Heart right ventricle (tissue), 16 donors: ENCODE measurements at regions of chr5 and their contacts with region 1.

Region 1: DNA sequence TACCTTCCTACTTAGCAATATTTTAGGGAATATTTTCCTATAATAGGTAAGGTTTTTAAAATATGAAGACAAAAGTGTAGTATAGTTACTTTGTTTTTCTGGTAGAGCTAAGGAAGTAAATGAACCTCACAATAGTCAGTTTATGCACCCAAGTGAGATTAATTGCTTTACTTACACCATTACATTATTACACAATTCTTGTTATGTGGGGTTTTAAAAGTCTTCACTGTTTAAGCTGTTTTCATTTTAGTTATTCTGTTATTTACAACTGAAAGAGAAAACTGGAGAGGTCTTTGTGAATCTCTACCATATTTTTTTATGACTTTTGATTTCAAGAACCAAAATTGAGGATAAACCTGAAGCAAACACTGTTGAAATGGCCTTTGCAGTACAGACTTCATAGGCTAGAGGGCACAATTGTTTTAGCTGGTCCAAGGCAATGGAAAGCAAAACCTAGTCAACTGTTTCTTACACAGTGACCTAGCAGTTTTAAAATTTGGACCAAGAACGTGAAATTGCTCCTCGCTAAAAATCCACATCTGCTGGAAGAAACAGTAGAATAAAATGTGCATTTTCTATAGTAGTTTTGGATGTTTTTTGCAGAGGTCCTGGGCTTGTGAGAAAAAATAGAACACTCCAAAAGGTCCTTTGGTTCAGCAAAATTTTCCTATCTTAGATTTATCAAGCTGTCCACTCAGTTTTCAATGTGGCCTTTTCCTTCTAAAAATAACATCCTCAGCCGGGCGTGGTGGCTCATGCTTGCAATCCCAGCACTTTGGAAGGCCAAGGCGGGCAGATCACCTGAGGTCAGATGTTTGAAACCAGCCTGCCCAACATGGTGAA is 66.4 kb upstream of the FER start:
- DNase-seq: peak in 1 of 2 donors; percentile 59
- ATAC-seq: peak; percentile 55 to 92 (median 88)
- H3K4me3 ChIP-seq: peak overlapping the region in 2 of 10 donors; percentile 4 to 23
- H3K27ac ChIP-seq: peak overlapping the region in 4 of 10 donors; percentile 19 to 39 (median 33)
- H3K4me1 ChIP-seq: peaks cover 0 to 6% (median 0%) of the 10 kb centered on the region in 9 donors
- H3K27me3 ChIP-seq: no peaks in the 10 kb centered on the region
- CTCF ChIP-seq: peak; percentile 58 to 91 (median 80)

Region 2: DNA sequence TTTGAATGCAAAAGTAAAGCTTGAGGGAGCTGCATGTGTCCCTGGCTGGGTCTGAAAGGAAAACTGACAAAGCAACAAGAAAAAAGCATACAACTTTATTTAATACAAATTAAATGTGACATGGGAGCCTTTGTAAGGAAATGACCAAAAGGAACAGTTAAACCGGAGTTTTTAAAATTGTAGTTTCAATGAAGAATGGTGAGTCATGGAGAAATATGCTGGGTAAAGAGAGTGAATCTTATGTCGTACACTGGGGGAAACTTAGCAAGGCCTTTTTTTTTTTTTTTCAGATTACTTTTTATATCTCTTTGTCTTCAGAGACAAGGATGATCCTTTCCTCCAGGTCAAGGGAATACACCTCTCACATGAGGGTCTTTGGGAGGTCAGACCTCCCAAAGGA is 249.3 kb before region 1 on chr5:
- intact Hi-C with region 1: no loop called
- DNase-seq: no peak
- ATAC-seq: no peak
- H3K4me3 ChIP-seq: no peak overlapping the region
- H3K27ac ChIP-seq: no peak overlapping the region
- H3K4me1 ChIP-seq: peaks cover 0 to 5% (median 0%) of the 10 kb centered on the region in 9 donors
- H3K27me3 ChIP-seq: peaks cover 0 to 4% (median 0%) of the 10 kb centered on the region in 7 donors
- CTCF ChIP-seq: no peak

Region 3: GRCh38 chr5:108606185-108606584 is 75.1 kb before region 1 on chr5:
- intact Hi-C with region 1: no loop called
- DNase-seq: no peak
- ATAC-seq: no peak
- H3K4me3 ChIP-seq: no peak overlapping the region
- H3K27ac ChIP-seq: no peak overlapping the region
- H3K4me1 ChIP-seq: no peaks in the 10 kb centered on the region
- H3K27me3 ChIP-seq: no peaks in the 10 kb centered on the region
- CTCF ChIP-seq: no peak

Region 4: DNA sequence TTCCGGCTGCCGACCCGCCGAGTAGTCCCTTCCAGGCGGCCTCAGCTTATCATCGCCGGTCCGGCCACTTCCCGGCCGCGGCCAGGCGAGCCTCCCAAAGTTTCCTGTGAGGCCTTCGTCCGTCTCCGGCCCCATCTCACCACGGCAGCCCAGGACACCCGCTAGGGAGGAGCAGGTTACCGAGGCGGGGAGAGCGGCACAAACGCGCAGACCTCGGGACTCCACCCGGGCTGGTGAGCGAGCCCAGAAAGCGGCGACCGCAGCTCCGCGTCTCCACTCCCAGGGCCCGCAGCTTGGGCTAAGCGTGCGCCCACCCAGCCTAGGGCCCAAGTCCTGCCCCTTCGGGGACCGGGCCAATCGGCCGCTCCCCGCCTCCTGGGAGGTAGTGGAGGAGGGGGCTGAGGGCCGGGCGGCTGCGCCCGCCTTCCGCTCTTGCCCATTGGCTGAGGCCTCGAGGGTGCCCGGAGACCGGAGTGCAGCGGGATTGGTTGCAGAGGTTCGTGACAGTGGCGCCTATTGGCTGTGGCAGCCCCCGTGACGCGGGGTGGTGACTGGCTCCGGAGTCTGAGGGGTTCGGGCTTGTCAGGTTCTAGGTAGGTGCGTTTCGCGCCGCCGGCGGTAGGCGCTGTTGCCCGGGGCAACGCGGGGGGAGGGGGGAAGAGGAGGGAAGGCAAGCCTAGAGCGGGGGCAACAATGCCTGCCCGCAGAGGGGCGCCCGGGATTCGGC is 67.3 kb after region 1 on chr5:
- intact Hi-C with region 1: loop called in 2 of 10 experiments (anchors 10 kb)
- DNase-seq: peak; percentile 99
- ATAC-seq: peak; percentile 97 to 100 (median 98)
- H3K4me3 ChIP-seq: peak overlapping the region; percentile 72 to 99 (median 92)
- H3K27ac ChIP-seq: peak overlapping the region; percentile 95 to 100 (median 98)
- H3K4me1 ChIP-seq: peaks cover 0 to 31% (median 14%) of the 10 kb centered on the region in 9 donors
- H3K27me3 ChIP-seq: no peaks in the 10 kb centered on the region
- CTCF ChIP-seq: peak in 3 of 9 donors; percentile 23 to 48 (median 41)

Region 5: DNA sequence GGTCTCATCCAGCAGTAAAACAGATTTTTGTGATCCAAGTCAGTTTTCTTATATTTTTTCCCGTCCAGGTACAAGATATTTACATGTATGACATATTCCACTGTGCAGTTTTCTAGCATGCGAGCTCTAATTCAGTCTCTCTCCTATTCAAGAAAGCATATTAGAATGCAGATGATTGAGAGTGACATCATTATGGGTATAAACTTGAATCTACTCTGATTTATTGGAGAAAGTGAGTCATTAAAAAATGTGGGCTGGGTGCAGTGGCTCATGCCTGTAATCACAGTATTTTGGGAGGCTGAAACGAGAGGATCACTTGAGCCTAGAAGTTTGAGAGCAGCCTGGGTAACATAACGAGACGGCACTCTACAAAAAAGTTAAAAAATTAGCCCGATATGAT is 72.6 kb after region 1 on chr5:
- intact Hi-C with region 1: loop called in 2 of 10 experiments (anchors 10 kb)
- DNase-seq: no peak
- ATAC-seq: no peak
- H3K4me3 ChIP-seq: no peak overlapping the region
- H3K27ac ChIP-seq: no peak overlapping the region
- H3K4me1 ChIP-seq: peaks cover 0 to 18% (median 6%) of the 10 kb centered on the region in 9 donors
- H3K27me3 ChIP-seq: no peaks in the 10 kb centered on the region
- CTCF ChIP-seq: no peak

Region 6: GRCh38 chr5:109439590-109439989 is 758.3 kb after region 1 on chr5:
- intact Hi-C with region 1: loop called in 2 of 10 experiments (anchors 10 kb)
- DNase-seq: no peak
- ATAC-seq: no peak
- H3K4me3 ChIP-seq: no peak overlapping the region
- H3K27ac ChIP-seq: no peak overlapping the region
- H3K4me1 ChIP-seq: no peaks in the 10 kb centered on the region
- H3K27me3 ChIP-seq: no peaks in the 10 kb centered on the region
- CTCF ChIP-seq: no peak

Region 7: GRCh38 chr5:109468737-109469420 is 787.6 kb after region 1 on chr5:
- intact Hi-C with region 1: loop called in 2 of 10 experiments (anchors 5 to 10 kb)
- DNase-seq: peak; percentile 93 to 98
- ATAC-seq: peak; percentile 83 to 99 (median 97)
- H3K4me3 ChIP-seq: no peak overlapping the region
- H3K27ac ChIP-seq: no peak overlapping the region
- H3K4me1 ChIP-seq: peaks cover 0 to 7% (median 4%) of the 10 kb centered on the region in 9 donors
- H3K27me3 ChIP-seq: no peaks in the 10 kb centered on the region
- CTCF ChIP-seq: peak; percentile 63 to 93 (median 78)